Posterior cingulate gyrus (tissue), 11 donors: ENCODE measurements at regions of chr2 and their contacts with region 1.

Region 1: GRCh38 chr2:53422979-53423378 is 344.6 kb upstream of the CHAC2 start:
- DNase-seq: peak in 3 of 10 donors; percentile 26 to 65 (median 26)

Region 2: DNA sequence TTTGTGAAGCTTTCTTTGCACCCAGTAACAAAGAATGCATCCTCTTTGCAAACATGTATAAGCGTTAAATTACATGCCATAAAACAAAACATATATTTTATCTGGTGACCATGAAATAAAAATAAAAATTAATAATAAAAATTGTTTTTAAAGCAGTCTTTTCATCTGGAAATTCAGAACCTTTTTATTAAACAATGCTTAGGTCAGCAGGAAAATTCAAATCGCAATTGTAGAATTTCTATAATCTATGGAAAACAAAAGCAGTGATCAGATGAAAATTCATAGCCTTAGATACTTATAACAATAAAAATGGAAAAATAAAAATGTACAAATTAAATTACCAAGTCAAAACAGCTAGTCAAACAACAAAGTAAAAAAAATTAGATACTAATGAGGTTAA is 91.3 kb before region 1 on chr2:
- intact Hi-C with region 1: no loop called
- DNase-seq: no peak

Region 3: DNA sequence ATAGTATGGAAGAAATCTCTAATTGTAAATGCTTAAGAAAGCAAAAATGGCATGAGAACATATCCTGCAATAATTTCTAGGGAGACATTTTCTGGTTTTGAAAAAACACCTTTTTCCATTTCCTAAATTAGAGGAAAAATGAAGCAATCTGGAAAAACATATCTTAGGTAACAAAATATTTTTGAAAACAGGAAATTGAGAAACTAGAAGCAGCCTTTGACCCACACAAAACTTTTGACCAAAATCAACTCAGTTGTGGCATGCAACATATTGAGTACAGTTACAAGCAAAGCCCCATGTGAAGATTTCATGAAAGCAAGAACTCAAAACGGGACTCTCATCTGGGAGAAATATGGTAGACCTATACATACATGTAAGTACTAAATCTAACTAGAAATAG is 316.1 kb after region 1 on chr2:
- intact Hi-C with region 1: loop called (anchors 10 kb)
- DNase-seq: no peak

Region 4: GRCh38 chr2:54029721-54030395 is 606.9 kb after region 1 on chr2:
- intact Hi-C with region 1: no loop called
- DNase-seq: no peak